GM13976 (cell line): ENCODE measurements at regions of chr2 and their contacts with region 1.

Region 1: DNA sequence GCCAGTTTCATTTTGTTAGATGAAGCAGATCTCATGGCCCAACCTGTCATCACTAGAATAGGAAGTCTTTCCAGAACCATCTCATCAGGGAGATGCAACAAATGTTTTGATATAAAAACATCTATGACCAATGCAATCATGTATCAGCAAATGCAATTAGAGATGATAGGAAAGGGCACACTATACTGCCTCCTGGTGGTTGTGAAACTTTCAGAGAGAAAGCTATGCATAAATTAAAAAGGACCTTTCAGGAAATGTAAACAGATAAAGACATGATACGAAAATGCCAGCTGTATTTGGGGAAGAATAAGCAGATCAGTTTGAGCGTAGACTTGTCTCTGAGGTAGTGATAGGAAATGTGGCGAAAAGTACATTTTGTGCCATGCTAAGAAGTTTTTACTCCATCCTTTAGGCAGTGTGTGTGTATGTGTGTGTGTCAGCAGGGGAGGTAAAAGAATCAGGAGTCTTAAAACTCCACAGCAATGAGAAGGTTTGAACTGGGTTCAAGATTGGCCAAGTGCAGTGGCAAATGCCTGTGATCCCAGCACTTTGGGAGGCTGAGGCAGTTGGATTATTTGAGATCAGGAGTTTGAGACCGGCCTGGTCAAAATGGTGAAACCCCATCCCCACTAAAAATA is 479.3 kb downstream of the CPS1 start:
- DNase-seq: no peak
- CTCF ChIP-seq: peak; percentile 31

Region 2: DNA sequence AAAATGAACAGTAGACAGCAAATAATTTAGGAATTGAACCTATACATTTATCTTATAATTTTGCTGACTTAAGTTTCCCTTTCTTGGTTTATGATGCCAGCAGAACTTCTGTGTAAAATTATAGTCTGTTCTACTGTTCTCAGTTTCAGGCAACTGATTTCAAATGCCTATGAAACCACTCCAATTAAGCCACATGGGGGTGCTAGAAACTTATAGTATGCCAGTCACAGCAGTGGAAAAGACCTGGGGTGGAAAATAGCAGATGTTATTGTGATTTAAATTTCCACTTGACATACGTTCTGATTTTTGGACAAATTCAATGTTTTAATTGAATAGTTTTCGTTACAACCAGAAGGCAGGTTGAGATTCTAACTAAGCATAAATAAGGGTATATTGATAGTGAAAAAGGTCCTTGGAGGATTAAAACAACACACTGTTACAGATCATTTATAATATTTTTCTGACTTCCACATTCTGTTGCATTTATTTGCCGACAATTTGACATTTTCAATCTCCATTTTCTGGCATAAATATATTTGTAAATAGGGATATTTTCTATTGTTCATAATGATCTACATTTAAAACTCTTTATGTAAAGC is 417.8 kb before region 1 on chr2:
- in situ Hi-C with region 1: loop called (anchors 25 kb)
- DNase-seq: no peak
- CTCF ChIP-seq: peak; percentile 37